Activated B cell treated with CpG ODN at 0.5 μM for 24 hours (primary cell): ENCODE measurements at regions of chr17 and their contacts with region 1.

Region 1: GRCh38 chr17:48322060-48322459 is 108.0 kb downstream of the SKAP1 start:
- DNase-seq: no peak
- ATAC-seq: no peak
- H3K4me3 Mint-ChIP-seq: no peak overlapping the region
- H3K27ac Mint-ChIP-seq: no peak overlapping the region
- H3K4me1 Mint-ChIP-seq: no peaks in the 10 kb centered on the region
- H3K27me3 Mint-ChIP-seq: no peaks in the 10 kb centered on the region
- CTCF ChIP-seq: no peak

Region 2: DNA sequence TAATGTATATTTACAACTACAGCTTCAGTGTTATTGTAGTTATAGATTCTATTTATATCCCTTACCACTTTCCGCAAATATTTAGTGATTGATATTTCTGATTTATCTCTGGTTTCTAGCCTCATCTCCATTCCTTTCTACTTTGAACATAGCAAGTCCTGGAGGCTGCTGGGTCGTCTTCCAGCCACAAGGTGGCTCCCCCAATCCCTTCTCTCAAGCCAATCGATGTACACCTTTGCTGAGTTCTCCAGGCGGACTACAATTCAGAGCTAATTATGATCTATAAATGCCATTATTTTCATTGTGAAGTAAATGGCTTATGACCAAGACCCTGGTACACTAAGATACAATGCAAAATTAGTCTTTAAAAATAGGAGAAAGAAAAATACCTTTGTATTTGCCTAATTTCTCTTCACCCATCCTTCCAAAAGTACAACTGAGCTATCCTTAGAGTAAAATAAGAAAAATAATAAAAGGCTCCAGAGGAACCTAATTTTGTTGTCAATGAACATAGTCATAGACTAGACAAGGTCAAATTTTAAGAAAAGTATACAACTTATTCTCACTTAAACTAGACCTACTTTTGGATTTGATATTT is 14.1 kb before region 1 on chr17:
- CTCF ChIA-PET with region 1: interaction called, 11 read pairs
- POLR2A ChIA-PET with region 1: no interaction called
- intact Hi-C with region 1: no loop called
- DNase-seq: peak; percentile 20
- ATAC-seq: peak; percentile 86
- H3K4me3 Mint-ChIP-seq: no peak overlapping the region
- H3K27ac Mint-ChIP-seq: no peak overlapping the region
- H3K4me1 Mint-ChIP-seq: peaks cover 6% of the 10 kb centered on the region
- H3K27me3 Mint-ChIP-seq: no peaks in the 10 kb centered on the region
- CTCF ChIP-seq: peak; percentile 70